K562 (cell line): ENCODE measurements at regions of chr5 and their contacts with region 1.

Region 1: GRCh38 chr5:142922223-142922952 is 152.2 kb downstream of the ARHGAP26 start:
- DNase-seq: peak; percentile 8 to 24 (median 14)
- ATAC-seq: peak; percentile 70
- H3K4me3 ChIP-seq: no peak overlapping the region
- H3K27ac ChIP-seq: no peak overlapping the region
- H3K4me1 ChIP-seq: no peaks in the 10 kb centered on the region
- H3K27me3 ChIP-seq: 0 out of 5 replicates have a peak, but pooled peaks cover 0 to 2% of the 10 kb centered on the region in 2 experiments
- CTCF ChIP-seq: peak in 2 of 3 experiments; percentile 23 to 54; a peak in 2 of 6 replicates
- EP300 ChIP-seq: no peak
- POLR2A ChIP-seq: no peak
- RAD21 ChIP-seq: peak; percentile 68 to 76

Region 2: DNA sequence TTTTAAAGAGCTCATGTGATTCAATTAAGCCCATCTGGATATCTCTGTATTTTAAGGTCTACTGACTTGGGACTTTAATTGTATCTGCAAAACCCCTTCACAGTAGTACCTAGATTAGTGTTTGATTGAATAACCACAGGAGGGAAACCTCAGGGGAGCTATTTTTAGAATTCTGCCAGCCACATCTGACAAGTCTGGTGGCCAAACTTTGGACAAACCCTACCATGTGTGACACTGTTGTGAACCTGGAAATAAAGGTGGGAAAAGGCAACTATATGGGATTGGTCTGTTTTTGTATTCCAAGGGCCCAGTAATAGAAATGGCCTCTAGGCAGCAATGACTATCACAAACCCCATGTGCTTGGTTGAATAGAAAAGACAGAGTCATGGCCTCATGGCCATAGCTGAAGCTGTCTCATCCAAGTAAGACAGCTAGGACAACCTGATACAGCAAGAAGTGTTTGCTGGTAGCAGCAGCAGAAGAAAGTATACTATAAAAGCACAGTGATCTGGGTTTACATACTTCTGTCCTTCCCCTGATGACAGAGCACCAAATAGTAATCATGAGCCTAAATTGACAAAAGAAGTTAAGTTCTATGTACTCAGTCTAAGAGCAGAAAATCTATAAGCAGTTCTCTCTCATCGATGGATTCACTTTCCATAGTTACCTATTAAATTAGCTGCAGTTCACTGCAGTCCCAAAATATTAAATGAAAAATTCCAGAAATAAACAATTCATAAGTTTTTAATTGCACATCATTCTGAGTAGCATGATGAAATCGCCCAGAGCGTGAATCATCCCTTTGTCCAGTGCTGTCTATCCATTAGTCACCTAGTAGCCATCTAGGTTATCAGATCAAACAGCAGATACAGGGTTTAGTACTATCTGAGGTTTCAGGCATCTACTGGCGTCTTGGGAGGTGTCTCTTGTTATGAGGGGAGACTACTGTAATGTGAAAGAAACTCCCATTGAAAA is 37.6 kb after region 1 on chr5:
- CTCF ChIA-PET with region 1: no interaction called
- POLR2A ChIA-PET with region 1: no interaction called
- in situ Hi-C with region 1: no loop called
- intact Hi-C with region 1: loop called (anchors 2 kb)
- DNase-seq: no peak
- ATAC-seq: no peak
- H3K4me3 ChIP-seq: no peak overlapping the region
- H3K27ac ChIP-seq: no peak overlapping the region
- H3K4me1 ChIP-seq: no peaks in the 10 kb centered on the region
- H3K27me3 ChIP-seq: no peaks in the 10 kb centered on the region; a peak in 1 of 5 replicates
- CTCF ChIP-seq: no peak
- EP300 ChIP-seq: no peak
- POLR2A ChIP-seq: no peak
- RAD21 ChIP-seq: no peak

Region 3: DNA sequence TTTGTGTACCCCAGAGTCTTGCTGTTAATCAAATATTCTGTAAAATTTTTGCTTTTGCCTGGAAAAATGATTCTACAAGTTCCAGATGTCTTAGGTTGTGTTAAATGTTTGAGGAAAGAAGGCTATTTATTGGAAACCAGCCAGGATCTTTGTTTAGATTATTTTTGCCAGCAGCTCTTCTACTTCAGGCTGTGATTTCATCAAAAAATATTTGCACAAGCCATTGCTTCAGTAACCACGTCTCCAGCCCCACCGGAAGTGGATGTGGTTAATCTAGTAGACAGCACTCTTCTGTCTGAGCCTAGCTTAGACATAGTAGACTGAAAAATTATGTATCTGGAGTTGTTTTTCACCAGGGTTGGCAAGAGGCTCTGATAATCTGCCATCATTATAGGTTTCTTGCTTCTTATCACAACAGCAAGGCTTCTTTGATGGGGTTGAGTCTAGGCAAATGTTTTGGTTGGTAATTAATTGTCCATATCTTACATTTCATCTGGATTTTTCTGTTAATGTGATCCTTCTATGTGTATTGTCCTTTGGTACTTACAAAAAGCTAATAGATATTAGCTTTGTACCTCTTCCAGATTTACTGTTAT is 1265.4 kb after region 1 on chr5:
- CTCF ChIA-PET with region 1: no interaction called
- POLR2A ChIA-PET with region 1: no interaction called
- in situ Hi-C with region 1: no loop called
- intact Hi-C with region 1: loop called (anchors 5 kb)
- DNase-seq: no peak
- ATAC-seq: no peak
- H3K4me3 ChIP-seq: no peak overlapping the region
- H3K27ac ChIP-seq: no peak overlapping the region
- H3K4me1 ChIP-seq: no peaks in the 10 kb centered on the region
- H3K27me3 ChIP-seq: 0 out of 5 replicates have a peak, but pooled peaks cover 0 to 3% of the 10 kb centered on the region in 2 experiments
- CTCF ChIP-seq: no peak
- EP300 ChIP-seq: no peak
- POLR2A ChIP-seq: no peak
- RAD21 ChIP-seq: no peak